ENCODE measurements at regions of chr5 and their contacts with region 1.

Region 1: GRCh38 chr5:39376293-39376714 is 12.0 kb upstream of the C9 start:
- DNase-seq: no peak
- ATAC-seq: peak; percentile 62 to 87 (median 74)
- H3K4me3 ChIP-seq: no peak overlapping the region
- H3K27ac ChIP-seq: no peak overlapping the region
- H3K4me1 ChIP-seq: no peaks in the 10 kb centered on the region
- H3K27me3 ChIP-seq: no peaks in the 10 kb centered on the region
- CTCF ChIP-seq: peak; percentile 69

Region 2: DNA sequence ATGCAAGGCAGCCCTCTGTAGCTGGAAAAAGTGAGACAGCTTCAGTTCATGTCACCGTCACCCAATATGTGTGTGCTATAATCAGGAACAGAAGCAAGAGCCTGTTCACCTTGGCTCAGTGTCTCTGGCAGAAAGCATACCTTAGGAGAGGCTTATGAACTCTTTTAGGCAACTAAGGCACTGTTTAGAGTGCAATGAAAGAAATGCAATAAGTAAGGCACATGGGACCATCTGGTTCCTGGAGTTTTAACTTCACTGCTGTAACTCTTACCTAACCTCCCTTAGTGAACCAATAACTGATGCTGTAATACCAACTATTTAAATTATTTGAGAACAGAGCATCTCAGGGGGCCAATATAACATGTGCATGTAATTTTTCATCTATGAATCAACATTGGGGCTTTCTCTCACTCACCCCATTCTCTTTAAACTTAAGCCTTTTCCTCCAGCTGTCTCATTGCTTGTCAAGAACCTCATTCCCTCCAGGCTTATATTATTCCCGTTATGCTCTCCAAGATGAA is 44.4 kb before region 1 on chr5:
- intact Hi-C with region 1: no loop called
- DNase-seq: no peak
- ATAC-seq: no peak
- H3K4me3 ChIP-seq: no peak overlapping the region
- H3K27ac ChIP-seq: no peak overlapping the region
- H3K4me1 ChIP-seq: no peaks in the 10 kb centered on the region
- H3K27me3 ChIP-seq: no peaks in the 10 kb centered on the region
- CTCF ChIP-seq: no peak

Region 3: DNA sequence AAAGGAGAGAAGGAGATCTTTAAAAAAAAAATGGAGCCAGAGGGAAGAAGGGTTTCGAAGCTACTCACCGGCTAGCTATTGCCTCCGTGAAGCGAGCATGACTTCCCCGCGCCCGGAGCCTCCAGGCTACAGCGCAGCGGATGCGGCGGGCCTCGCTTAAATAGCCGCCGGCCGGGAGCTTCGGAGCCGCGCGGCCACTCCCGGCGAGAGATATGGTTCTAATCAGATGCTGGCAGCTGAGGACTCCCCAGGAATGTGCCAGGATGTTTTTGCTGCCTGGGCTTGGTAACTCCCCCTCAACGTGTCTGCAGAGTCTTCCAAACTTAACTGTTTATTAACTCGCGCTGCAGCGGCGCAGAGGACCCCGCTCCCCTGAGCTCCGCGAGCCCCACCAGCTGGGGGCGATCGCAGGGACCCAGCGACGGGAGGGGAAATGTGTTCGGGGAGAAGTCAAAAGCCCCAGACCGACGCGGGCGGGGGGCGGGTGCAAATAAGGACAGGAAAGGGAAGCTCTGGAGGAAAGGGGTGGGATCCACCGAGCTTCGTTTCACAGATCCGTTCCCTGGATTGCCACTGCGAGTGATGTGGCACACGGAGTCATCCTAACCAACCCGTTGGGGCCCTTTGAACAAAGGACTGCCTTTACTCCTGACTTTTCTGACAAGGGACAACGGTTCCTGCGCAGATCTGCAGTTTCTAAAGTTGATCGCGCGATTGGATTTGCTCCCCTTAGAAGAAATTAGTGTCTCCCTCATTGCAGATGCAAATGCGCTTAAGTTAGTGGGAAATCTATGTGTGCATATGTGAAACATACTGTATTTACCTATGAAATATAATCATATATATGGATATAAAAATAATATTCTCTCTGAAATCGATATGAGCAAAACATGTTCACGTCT is 48.7 kb after region 1 on chr5 and contains the start of gene DAB2:
- intact Hi-C with region 1: loop called in 1 of 2 experiments (anchors 2 kb)
- DNase-seq: peak; percentile 89 to 90
- ATAC-seq: peak; percentile 73 to 84 (median 80)
- H3K4me3 ChIP-seq: peak within 1 kb of the TSS; percentile 72
- H3K27ac ChIP-seq: peak within 1 kb of the TSS; percentile 63
- H3K4me1 ChIP-seq: peaks cover 18% of the 10 kb centered on the region
- H3K27me3 ChIP-seq: peaks cover 0 to 12% (median 3%) of the 10 kb centered on the region in 3 donors
- CTCF ChIP-seq: peak; percentile 42
- total RNA-seq, gene DAB2: 13.5 to 37.1 (median 21.0) TPM

Region 4: DNA sequence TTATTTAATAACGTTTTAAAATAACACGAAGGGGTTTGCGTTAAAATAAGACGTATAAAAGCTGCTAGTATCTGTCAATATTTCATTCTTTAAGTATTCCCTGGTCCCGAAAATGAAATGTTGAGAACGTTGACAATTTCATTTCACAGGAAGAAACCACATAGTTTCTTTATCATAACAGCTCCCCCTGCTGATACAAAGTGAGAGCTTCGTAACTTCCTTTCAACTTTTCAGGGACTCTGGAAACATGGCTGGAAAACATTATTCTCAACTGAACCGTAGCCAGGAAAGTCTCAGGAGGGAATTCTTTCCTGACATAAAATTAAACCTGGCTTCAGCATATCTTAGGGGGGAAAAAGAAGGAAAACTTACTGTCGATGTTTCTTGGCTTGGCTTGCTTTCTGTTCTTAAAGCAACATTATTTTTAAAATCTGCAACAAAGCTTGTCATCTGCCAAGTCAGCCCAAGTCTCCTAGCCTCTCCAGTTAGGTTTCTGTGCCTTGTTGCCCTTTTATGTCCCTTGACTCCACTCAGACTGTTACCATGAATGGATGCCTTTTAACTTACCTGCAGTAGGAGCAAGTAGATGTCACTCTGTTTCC is 171.3 kb after region 1 on chr5:
- intact Hi-C with region 1: loop called (anchors 1 to 5 kb)
- DNase-seq: no peak
- ATAC-seq: peak in 3 of 4 donors; percentile 40 to 74 (median 44)
- H3K4me3 ChIP-seq: no peak overlapping the region
- H3K27ac ChIP-seq: no peak overlapping the region
- H3K4me1 ChIP-seq: no peaks in the 10 kb centered on the region
- H3K27me3 ChIP-seq: no peaks in the 10 kb centered on the region
- CTCF ChIP-seq: peak; percentile 76

Region 5: GRCh38 chr5:39570403-39571027 is 194.2 kb after region 1 on chr5:
- intact Hi-C with region 1: loop called (anchors 5 kb)
- DNase-seq: no peak
- ATAC-seq: peak in 1 of 4 donors; percentile 57
- H3K4me3 ChIP-seq: no peak overlapping the region
- H3K27ac ChIP-seq: no peak overlapping the region
- H3K4me1 ChIP-seq: no peaks in the 10 kb centered on the region
- H3K27me3 ChIP-seq: no peaks in the 10 kb centered on the region
- CTCF ChIP-seq: peak; percentile 72

Region 6: GRCh38 chr5:40066616-40067015 is 690.3 kb after region 1 on chr5:
- intact Hi-C with region 1: no loop called
- DNase-seq: no peak
- ATAC-seq: no peak
- H3K4me3 ChIP-seq: no peak overlapping the region
- H3K27ac ChIP-seq: no peak overlapping the region
- H3K4me1 ChIP-seq: no peaks in the 10 kb centered on the region
- H3K27me3 ChIP-seq: no peaks in the 10 kb centered on the region
- CTCF ChIP-seq: no peak